OCI-LY7 (cell line): ENCODE measurements at regions of chr7 and their contacts with region 1.

Region 1: GRCh38 chr7:44867073-44867995 is 18.0 kb downstream of the PURB start:
- DNase-seq: no peak
- H3K4me3 ChIP-seq: no peak overlapping the region
- H3K27ac ChIP-seq: no peak overlapping the region
- H3K4me1 ChIP-seq: no peaks in the 10 kb centered on the region
- CTCF ChIP-seq: no peak

Region 2: DNA sequence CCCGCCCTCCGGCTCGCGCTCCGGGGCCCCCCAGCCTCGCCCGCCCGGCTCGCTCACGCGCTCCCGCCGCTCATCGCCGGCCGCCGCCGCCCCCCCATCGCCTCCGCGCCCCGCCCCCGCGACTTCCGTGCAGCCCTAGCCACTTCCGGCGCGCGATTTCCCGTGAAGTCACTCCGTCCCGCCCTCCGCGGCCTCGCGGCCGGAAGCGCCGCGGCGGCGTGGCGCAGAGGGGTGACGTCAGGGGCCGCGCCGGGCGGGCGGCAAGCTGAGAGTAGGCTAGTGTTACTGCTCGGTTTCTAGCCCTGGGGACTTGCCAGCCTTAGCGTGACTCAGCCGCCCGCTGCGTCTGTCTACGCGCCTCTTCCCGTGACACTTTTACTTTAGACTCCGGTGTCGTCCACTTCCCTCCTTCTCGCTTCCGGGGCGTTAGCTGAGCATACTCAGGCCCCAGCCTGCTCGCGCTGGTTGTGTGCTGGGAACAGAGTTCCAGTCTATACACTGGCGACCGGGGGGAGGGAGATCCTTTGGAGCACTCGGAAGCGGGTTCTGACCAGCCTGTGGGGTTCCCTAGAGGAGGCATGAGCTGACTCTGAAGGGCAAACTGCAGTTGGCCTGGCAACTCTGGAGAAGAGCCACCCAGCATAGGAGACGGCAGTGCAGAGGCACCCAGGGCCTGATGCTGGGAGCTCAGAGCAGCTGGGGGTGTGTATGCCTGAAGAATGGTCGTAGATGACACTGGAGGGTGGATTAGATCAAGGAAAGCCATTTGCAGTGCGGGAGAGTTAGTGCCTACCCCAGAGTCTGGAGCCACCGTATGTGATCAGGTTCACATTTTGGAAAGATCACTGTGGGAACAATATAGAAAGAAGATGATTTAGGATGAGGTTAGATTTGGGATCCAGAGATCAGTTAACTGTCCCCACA is 18.3 kb after region 1 on chr7 and contains the start of gene PURB:
- CTCF ChIA-PET with region 1: no interaction called
- POLR2A ChIA-PET with region 1: interaction called, 8 read pairs
- intact Hi-C with region 1: loop called (anchors 2 kb)
- DNase-seq: peak; percentile 96
- H3K4me3 ChIP-seq: peak within 1 kb of the TSS; percentile 77
- H3K27ac ChIP-seq: peak within 1 kb of the TSS; percentile 91
- H3K4me1 ChIP-seq: peaks cover 63% of the 10 kb centered on the region
- CTCF ChIP-seq: no peak
- total RNA-seq, gene PURB: 14.9 and 15.2 TPM in 2 replicates

Region 3: DNA sequence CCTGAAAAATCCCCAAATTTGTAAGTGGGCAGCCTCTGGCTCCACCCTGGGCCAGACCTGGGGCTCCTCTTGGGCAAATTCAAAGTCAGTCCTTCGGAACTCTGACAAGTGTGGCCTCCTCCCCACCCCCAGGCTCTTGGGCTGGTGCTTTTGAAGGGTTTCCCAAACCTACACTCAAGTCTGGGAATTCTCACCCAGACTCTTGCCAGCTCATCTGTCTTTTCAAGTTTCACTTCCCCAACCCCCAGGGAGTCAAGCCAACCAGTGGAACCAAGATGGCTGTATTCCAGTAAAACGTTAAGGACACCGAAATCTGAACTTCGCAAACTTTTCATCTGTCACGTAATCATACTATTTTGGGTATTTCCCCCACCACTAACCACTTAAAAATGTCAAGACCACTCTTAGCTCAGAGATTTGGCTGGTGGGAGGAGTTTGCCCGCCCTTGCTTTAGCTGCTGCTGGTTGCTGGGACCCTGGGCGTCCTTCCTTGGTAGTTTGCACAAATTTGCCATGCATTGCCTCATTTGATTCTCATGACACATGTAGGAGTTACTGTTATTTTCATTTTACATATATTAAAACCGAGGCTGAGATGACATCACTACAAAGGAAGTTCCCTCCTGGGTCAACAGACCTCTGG is 113.2 kb after region 1 on chr7:
- CTCF ChIA-PET with region 1: no interaction called
- POLR2A ChIA-PET with region 1: no interaction called
- intact Hi-C with region 1: no loop called
- DNase-seq: peak; percentile 72
- H3K4me3 ChIP-seq: peak overlapping the region; percentile 67
- H3K27ac ChIP-seq: peak overlapping the region; percentile 84
- H3K4me1 ChIP-seq: peaks cover 86% of the 10 kb centered on the region
- CTCF ChIP-seq: no peak

Region 4: DNA sequence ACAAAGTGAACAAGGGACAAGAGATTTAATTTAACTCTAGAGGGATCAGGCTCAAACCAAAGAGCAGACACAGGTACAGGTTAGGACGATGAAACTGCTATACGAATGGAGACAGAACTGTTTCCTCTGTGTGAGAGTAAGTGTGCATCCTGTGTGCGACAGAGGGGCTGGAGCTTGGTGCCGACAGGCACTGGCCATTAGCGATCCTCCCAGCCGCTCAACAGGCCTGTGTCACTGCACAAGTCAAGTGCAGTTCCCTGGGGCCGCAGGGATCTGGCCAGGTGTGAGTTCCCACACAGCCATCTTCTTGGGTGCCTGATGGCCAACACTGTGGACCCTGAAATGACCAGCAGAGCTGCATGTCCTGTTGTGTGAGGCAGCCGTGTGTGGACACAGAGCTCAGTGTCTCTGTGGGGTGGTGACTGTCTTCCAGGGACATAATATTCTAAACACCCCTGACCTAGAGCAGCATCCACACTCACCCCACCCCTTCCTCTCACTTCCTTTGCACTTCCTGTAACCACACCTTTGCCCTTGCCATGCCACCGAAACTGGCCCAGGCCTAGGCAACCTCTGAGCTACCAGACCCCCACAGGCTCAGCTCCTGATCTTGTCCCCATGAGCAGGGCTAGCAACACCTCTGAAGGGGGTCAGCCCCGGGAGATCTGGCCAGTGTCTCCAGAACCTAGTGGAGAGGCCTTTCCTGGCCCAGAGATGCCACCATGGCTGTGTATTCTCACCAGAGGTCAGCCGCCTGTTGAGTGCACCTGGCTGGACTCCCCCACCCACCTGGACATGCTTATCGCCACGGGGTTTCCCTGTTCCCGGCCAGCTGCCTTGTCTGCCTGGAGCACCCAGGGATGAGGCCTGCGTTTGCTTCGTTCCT is 255.9 kb after region 1 on chr7:
- CTCF ChIA-PET with region 1: no interaction called
- POLR2A ChIA-PET with region 1: no interaction called
- intact Hi-C with region 1: no loop called
- DNase-seq: no peak
- H3K4me3 ChIP-seq: no peak overlapping the region
- H3K27ac ChIP-seq: no peak overlapping the region
- H3K4me1 ChIP-seq: peaks cover 18% of the 10 kb centered on the region
- CTCF ChIP-seq: no peak